Ovary (tissue), 10 donors: ENCODE measurements at regions of chr2 and their contacts with region 1.

Region 1: DNA sequence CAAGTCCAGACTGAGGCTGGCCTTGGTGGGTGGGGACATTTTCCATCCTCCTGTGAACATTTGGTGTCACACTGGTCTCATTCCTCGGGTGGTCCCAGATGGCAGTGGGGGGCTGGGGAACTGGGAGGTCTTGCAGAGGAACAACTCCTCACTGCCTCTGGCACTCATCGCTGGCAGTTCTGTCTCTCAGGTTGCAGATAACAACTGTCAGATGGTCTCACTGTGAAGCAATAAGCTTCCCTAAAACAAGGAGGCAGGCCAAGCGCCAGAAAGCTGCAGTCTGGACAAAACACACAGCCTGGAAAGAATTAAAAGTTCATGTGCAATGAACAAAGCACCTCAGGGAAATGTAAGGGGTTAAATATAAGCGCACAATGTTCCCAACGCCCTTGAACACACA is 78.1 kb downstream of the IRS1 start:
- DNase-seq: peak; percentile 54 to 77 (median 66)
- H3K4me3 ChIP-seq: no peak overlapping the region
- H3K27ac ChIP-seq: no peak overlapping the region
- H3K4me1 ChIP-seq: peaks cover 15% of the 10 kb centered on the region
- H3K27me3 ChIP-seq: no peaks in the 10 kb centered on the region
- CTCF ChIP-seq: no peak
- EP300 ChIP-seq: no peak
- POLR2A ChIP-seq: no peak

Region 2: GRCh38 chr2:226411727-226412360 is 309.7 kb before region 1 on chr2:
- intact Hi-C with region 1: no loop called
- DNase-seq: no peak
- H3K4me3 ChIP-seq: no peak overlapping the region
- H3K27ac ChIP-seq: no peak overlapping the region
- H3K4me1 ChIP-seq: no peaks in the 10 kb centered on the region
- H3K27me3 ChIP-seq: no peaks in the 10 kb centered on the region
- CTCF ChIP-seq: no peak
- EP300 ChIP-seq: no peak
- POLR2A ChIP-seq: no peak

Region 3: GRCh38 chr2:226561962-226562361 is 159.6 kb before region 1 on chr2:
- intact Hi-C with region 1: no loop called
- DNase-seq: no peak
- H3K4me3 ChIP-seq: no peak overlapping the region
- H3K27ac ChIP-seq: no peak overlapping the region
- H3K4me1 ChIP-seq: no peaks in the 10 kb centered on the region
- H3K27me3 ChIP-seq: no peaks in the 10 kb centered on the region
- CTCF ChIP-seq: no peak
- EP300 ChIP-seq: no peak
- POLR2A ChIP-seq: no peak

Region 4: DNA sequence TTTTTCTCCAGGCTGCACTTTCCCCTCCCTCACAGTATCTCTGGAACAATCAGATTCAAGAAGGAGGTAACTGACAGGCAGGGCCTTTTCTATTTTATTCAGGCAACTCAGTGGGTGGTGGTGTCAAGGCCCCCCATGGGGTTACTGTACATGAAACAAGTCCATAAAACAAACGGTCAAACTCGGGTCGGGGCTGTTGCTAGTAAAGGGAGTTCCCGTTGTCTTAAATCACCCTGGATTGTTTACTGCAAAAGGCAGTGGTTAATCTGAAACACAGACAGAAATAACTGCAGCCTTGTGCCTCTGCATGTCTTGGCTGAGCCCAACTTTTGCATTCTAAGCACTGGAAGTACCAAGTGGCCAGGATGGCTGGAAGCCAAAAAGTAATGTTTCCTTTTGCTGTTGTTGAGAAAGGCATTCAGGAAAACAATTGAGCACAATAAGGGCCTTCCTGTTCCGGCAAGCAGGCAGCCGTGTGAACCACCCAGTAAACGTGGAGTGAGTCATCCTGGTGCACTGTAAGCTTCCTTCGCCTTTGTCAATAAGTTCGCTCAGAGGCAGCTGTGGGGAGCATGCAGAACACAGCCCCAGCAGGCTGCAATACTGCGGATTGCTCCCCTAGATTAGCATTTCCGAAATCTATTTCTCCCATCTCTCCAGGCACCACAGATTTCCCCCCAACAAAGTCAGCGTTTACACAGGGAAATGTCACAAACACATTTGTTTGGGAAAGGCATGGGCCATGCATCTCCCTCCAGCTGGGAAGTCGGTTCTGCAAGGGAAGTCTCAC is 71.5 kb before region 1 on chr2:
- intact Hi-C with region 1: loop called in 1 of 4 experiments (anchors 10 kb)
- DNase-seq: peak; percentile 72 to 80 (median 76)
- H3K4me3 ChIP-seq: no peak overlapping the region
- H3K27ac ChIP-seq: peak overlapping the region in 1 of 2 donors; percentile 76
- H3K4me1 ChIP-seq: peaks cover 2% of the 10 kb centered on the region
- H3K27me3 ChIP-seq: no peaks in the 10 kb centered on the region
- CTCF ChIP-seq: no peak
- EP300 ChIP-seq: no peak
- POLR2A ChIP-seq: no peak